Thyroid gland (tissue), 4 donors: ENCODE measurements at regions of chr11 and their contacts with region 1.

Region 1: DNA sequence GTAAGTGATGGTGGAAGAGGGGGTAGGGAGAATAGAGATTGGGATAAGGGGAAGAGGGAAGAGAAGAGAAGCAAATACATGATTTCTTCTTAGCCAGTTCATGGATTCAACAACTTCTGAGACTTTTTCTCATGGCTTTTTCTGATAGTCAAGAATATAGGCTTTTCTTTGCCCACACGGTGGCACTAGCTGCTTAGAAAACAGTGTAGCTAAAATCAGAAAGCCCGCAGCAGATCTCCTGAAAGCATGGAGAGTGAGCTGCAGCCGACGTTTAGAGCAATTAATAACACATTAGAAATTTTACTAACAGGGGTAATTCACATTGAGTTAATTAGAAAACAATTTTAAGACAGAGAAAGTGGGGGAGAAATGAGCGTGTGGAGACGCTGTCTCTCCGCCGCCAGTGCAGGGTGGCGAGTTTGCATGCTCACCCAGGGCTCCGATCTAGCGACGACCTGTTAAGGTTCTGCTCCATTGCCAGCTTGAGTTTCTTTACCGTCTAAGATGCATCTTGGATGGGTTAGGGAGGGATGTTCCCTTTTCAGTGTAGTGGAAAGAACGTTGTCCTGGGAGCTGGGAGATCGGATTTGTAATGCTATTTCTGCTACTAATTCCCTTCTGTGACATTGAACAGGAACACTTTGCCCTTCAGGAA is 3.3 kb upstream of the RAG1 start:
- DNase-seq: peak; percentile 62 to 74
- H3K4me3 ChIP-seq: peak overlapping the region in 2 of 3 donors; percentile 1 to 13
- H3K27ac ChIP-seq: peak overlapping the region in 2 of 3 donors; percentile 47 to 61
- H3K4me1 ChIP-seq: peaks cover 0 to 10% of the 10 kb centered on the region in 2 donors
- H3K27me3 ChIP-seq: no peaks in the 10 kb centered on the region
- CTCF ChIP-seq: peak in 5 of 6 experiments; percentile 35 to 90 (median 79)
- POLR2A ChIP-seq: no peak

Region 2: GRCh38 chr11:36622431-36623136 is 58.1 kb after region 1 on chr11:
- intact Hi-C with region 1: loop called (anchors 10 kb)
- DNase-seq: peak in 1 of 2 donors; percentile 15
- H3K4me3 ChIP-seq: no peak overlapping the region
- H3K27ac ChIP-seq: peak overlapping the region; percentile 17 to 92 (median 86)
- H3K4me1 ChIP-seq: peaks cover 43 to 56% of the 10 kb centered on the region in 2 donors
- H3K27me3 ChIP-seq: no peaks in the 10 kb centered on the region
- CTCF ChIP-seq: peak in 5 of 6 experiments; percentile 44 to 89 (median 86)
- POLR2A ChIP-seq: no peak

Region 3: DNA sequence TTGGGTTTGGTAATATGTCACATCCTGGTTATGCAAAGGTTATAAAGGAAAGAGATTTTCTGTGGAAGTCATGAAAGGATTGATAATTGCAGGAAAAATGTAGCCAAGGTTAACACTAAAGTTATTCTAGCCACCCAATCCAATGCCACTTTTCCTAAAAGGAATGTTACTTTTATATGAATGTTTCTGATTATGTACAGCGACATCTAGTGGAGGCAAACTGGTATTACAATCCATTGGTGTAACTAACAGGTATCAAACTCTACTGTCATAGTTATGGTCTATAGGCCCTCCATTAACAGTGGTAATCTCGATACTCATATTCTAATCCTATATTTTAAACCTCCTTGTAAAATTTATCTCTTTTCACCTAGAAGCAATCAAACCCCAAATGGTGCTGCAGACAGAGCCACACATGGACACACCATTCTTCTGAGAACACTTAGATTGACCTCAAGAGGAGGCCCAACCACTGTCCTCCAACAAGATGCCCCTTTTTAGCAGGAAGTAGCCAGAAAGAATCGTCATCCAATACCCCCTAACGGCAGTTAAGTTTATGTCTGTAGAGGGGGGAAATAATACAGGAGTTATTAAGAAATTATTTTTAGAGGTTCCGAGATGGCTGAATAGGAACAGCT is 108.4 kb after region 1 on chr11:
- intact Hi-C with region 1: loop called (anchors 5 kb)
- DNase-seq: peak in 1 of 2 donors; percentile 4
- H3K4me3 ChIP-seq: no peak overlapping the region
- H3K27ac ChIP-seq: no peak overlapping the region
- H3K4me1 ChIP-seq: no peaks in the 10 kb centered on the region
- H3K27me3 ChIP-seq: no peaks in the 10 kb centered on the region
- CTCF ChIP-seq: peak; percentile 63 to 91 (median 82)
- POLR2A ChIP-seq: no peak

Region 4: DNA sequence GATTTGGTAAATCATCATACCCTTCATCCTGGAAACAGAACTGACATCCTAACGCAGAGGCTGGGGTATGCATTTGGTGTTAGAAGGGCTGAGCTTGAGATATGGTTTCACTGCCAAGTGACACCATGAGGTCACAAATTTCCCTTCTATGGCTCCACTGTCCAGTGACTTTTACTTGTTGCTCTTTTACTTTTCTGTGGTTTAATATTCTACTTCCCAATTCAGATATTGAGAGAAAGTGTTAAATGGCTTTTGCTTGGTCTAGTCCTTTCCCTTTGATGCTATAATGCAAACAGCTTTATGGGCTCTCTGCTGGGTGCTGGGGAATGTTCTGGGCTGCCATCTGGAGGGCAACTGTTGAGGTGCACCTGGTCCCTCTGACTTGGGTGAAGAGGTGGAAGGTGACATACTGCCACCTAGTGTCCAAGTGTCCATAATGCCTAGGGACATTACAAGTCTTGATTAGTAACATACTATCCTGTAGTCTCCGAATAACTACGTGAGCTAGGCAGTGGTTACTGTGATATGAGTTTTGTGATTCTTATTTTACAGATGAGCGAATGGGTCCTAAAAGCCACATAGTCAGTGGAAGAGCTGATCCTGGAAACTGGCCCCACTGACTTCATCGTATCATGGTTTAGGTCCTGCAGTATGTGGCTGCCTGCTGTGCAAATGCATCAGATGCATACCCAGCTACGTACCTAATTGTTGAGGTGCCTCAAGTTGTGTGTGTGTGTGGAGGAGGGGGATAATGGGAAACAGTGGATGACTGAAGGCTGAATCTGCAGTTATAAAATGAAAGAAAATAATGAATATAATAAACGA is 182.6 kb after region 1 on chr11:
- intact Hi-C with region 1: loop called (anchors 5 kb)
- DNase-seq: peak; percentile 87
- H3K4me3 ChIP-seq: no peak overlapping the region
- H3K27ac ChIP-seq: no peak overlapping the region
- H3K4me1 ChIP-seq: no peaks in the 10 kb centered on the region
- H3K27me3 ChIP-seq: no peaks in the 10 kb centered on the region
- CTCF ChIP-seq: peak; percentile 84 to 99 (median 98)
- POLR2A ChIP-seq: no peak